KBM-7 (cell line): ENCODE measurements at regions of chr2 and their contacts with region 1.

Region 1: GRCh38 chr2:54176577-54176976 is 61.2 kb downstream of the ACYP2 start:
- DNase-seq: peak; percentile 26

Region 2: DNA sequence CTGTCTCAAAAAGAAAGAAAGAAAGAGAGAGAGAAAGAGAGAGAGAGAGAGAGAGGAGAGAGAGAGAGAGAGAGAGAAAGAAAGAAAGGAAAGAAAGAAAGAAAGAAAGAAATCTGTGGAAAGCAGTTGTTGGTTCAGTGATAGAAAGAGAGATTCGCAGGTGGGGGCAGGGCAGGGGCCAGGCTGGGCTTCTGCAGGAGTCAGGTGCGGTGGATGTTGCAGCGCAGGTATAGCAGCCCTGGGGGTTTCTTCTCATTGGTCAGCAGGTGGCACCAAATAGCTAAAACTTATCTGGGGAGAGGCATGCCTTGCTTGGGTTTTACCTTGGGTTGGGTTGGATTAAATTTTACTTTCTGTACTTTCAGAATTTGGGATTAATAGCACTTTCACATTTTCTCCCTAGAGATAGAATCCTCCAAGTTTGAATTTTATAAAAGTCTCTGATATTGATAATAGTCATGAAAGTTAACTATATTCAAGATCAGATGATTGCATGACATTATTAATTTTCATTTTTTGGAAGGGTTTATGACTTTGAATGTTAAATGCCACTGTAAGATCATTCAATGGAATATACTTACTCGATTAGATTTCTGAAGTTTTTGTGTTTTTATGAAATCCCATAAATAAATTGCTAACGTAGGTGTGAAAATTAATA is 346.2 kb after region 1 on chr2:
- in situ Hi-C with region 1: loop called (anchors 25 kb)
- DNase-seq: peak; percentile 49